ENCODE measurements at regions of chr7 and their contacts with region 1.

Region 1: GRCh38 chr7:47743965-47744591 is 162.2 kb upstream of the TNS3 start:
- DNase-seq: no peak
- ATAC-seq: no peak
- H3K4me3 ChIP-seq: no peak overlapping the region
- H3K4me3 Mint-ChIP-seq: no peak overlapping the region
- H3K27ac ChIP-seq: no peak overlapping the region
- H3K27ac Mint-ChIP-seq: no peak overlapping the region
- H3K4me1 ChIP-seq: peaks cover under 1% of the 10 kb centered on the region in 2 donors
- H3K4me1 Mint-ChIP-seq: peaks cover 10% of the 10 kb centered on the region
- H3K27me3 ChIP-seq: no peaks in the 10 kb centered on the region
- H3K27me3 Mint-ChIP-seq: no peaks in the 10 kb centered on the region
- CTCF ChIP-seq: no peak

Region 2: GRCh38 chr7:47539398-47540052 is 204.6 kb before region 1 on chr7:
- CTCF ChIA-PET with region 1: no interaction called
- POLR2A ChIA-PET with region 1: no interaction called
- intact Hi-C with region 1: no loop called
- DNase-seq: no peak
- ATAC-seq: no peak
- H3K4me3 ChIP-seq: no peak overlapping the region
- H3K4me3 Mint-ChIP-seq: no peak overlapping the region
- H3K27ac ChIP-seq: no peak overlapping the region
- H3K27ac Mint-ChIP-seq: no peak overlapping the region
- H3K4me1 ChIP-seq: peaks cover 17 to 26% of the 10 kb centered on the region in 2 donors
- H3K4me1 Mint-ChIP-seq: peaks cover 59% of the 10 kb centered on the region
- H3K27me3 ChIP-seq: peaks cover 0 to 19% (median 7%) of the 10 kb centered on the region in 4 experiments
- H3K27me3 Mint-ChIP-seq: peaks cover 5% of the 10 kb centered on the region
- CTCF ChIP-seq: no peak

Region 3: DNA sequence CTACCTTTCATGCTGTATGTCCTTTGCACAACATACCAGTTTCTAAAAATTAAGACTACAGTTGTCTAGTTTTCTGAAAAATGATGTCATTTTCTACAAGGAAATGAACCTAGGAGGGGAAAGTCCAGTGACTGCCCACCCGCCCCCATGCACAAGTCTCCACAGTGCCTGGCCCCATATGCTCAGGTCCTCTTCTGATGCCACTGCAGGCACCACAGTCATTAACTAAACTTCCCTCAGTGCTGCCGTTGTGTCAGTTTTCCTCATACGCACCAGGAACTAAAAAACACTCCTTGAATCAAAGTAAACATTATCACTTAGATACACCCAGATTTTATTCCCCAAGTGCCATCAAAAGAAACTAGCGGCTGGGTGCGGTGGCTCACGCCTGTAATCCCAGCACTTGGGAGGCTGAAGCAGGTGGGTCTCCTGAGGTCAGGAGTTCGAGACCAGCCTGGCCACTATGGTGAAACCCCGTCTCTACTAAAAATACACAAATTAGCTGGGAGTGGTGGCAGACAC is 155.3 kb before region 1 on chr7:
- CTCF ChIA-PET with region 1: no interaction called
- POLR2A ChIA-PET with region 1: interaction called, 10 read pairs
- intact Hi-C with region 1: no loop called
- DNase-seq: no peak
- ATAC-seq: no peak
- H3K4me3 ChIP-seq: no peak overlapping the region
- H3K4me3 Mint-ChIP-seq: no peak overlapping the region
- H3K27ac ChIP-seq: no peak overlapping the region
- H3K27ac Mint-ChIP-seq: no peak overlapping the region
- H3K4me1 ChIP-seq: peaks cover 5 to 10% of the 10 kb centered on the region in 2 donors
- H3K4me1 Mint-ChIP-seq: peaks cover 27% of the 10 kb centered on the region
- H3K27me3 ChIP-seq: no peaks in the 10 kb centered on the region
- H3K27me3 Mint-ChIP-seq: no peaks in the 10 kb centered on the region
- CTCF ChIP-seq: no peak

Measured in B cell (primary cell).